Transverse colon (tissue), 4 donors: ENCODE measurements at regions of chr18 and their contacts with region 1.

Region 1: DNA sequence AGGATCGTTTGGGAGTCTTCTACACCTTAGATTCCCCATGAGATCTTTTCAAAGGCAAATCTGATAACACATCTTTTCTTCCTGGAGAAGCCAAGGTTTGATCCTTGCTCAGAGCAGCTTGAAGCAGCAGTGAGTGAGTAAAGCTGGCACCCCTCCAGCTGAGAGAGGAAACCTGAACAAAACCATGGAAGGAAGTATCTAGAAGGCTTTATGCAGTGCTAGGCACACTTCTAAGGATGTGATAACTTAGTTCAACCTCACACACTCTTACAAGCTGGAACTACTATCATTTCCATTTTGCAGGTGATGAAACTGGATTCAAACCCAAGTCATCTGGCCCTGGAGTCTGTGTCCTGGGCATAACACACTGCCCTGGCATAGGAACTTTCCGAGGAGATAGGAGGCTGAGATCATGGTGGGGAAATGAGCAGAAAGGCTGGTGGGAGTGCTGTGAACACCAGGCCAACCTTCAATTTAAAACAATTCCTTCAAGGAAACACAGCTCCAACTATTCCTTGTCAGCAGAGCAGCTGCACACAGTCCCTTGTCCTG is 71.2 kb downstream of the CTAGE1 start:
- DNase-seq: peak; percentile 81
- H3K4me3 ChIP-seq: no peak overlapping the region
- H3K27ac ChIP-seq: peak overlapping the region; percentile 81 to 89 (median 86)
- H3K4me1 ChIP-seq: peaks cover 13 to 54% (median 30%) of the 10 kb centered on the region in 4 donors
- H3K27me3 ChIP-seq: peaks cover 23% of the 10 kb centered on the region
- CTCF ChIP-seq: no peak
- EP300 ChIP-seq: no peak
- POLR2A ChIP-seq: no peak

Region 2: DNA sequence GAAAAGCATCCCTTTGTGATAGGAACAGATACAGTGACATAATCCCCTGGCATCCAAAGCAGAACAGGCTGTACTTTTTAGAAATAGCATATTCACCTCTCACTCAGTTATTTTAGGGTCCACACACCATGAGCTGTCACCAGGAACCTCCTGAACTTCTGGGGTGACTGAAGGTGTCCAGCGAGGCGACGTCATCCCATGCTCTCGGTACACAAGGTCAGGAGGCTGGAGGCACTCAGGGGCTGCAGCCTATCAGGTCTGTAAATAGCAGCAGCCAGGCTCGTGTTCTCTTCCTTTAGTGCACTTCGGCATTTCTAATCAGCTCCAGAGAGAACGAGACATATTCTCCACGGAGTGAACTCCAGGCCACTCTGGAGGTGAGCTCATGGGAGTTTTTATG is 78.8 kb before region 1 on chr18:
- in situ Hi-C with region 1: no loop called
- intact Hi-C with region 1: loop called (anchors 2 kb)
- DNase-seq: no peak
- H3K4me3 ChIP-seq: no peak overlapping the region
- H3K27ac ChIP-seq: no peak overlapping the region
- H3K4me1 ChIP-seq: no peaks in the 10 kb centered on the region
- H3K27me3 ChIP-seq: no peaks in the 10 kb centered on the region
- CTCF ChIP-seq: no peak
- EP300 ChIP-seq: no peak
- POLR2A ChIP-seq: no peak